Ascending aorta (tissue), 2 donors: ENCODE measurements at regions of chr7 and their contacts with region 1.

Region 1: GRCh38 chr7:38932509-38933168 is 23.6 kb upstream of the VPS41 start:
- DNase-seq: peak in 1 of 2 donors; percentile 73
- H3K4me3 ChIP-seq: no peak overlapping the region
- H3K27ac ChIP-seq: no peak overlapping the region
- H3K4me1 ChIP-seq: peaks cover 0 to 3% of the 10 kb centered on the region in 2 donors
- H3K27me3 ChIP-seq: no peaks in the 10 kb centered on the region
- CTCF ChIP-seq: peak; percentile 62 to 94 (median 85)

Region 2: DNA sequence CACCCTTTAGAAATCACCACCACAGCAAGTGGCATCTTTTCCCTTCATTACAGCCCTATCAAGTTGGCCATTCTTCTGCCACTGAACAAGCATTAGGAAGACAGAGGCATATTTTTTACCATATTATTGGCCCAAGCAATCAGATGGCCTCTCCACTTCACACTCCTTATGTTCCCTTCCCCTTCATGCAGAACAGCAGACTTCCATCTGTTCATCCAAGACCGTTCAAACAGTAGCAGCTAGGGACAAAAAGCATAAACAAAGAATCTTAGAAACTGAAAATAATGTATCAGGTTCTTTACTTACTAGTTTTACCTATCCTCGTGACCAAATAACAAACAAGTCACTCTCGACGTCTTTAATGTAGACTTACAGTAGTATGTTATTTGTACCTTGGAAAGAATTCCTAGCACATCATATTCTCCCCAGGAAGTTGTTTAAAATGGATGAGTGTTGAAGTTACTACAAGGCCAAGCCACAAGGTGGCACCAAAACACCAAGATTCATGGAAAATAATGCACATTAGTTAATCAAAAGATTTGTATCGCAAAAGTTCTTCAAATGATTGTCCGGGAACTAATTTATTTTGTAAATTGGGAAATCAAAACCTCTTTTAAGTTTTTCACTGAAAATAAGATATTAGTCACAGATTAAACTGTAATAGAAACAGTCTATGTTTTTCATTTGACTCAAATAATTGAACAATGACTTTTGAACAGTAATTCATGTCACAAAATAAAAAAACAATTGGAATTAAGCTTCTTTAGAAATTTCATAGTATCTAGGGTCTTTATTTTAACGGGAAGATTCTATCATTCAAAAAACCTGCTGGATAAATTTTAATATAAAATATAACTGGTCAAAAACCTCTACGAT is 135.8 kb before region 1 on chr7:
- intact Hi-C with region 1: loop called (anchors 5 kb)
- DNase-seq: peak in 1 of 2 donors; percentile 76
- H3K4me3 ChIP-seq: no peak overlapping the region
- H3K27ac ChIP-seq: no peak overlapping the region
- H3K4me1 ChIP-seq: no peaks in the 10 kb centered on the region
- H3K27me3 ChIP-seq: no peaks in the 10 kb centered on the region
- CTCF ChIP-seq: peak; percentile 56 to 86 (median 75)

Region 3: DNA sequence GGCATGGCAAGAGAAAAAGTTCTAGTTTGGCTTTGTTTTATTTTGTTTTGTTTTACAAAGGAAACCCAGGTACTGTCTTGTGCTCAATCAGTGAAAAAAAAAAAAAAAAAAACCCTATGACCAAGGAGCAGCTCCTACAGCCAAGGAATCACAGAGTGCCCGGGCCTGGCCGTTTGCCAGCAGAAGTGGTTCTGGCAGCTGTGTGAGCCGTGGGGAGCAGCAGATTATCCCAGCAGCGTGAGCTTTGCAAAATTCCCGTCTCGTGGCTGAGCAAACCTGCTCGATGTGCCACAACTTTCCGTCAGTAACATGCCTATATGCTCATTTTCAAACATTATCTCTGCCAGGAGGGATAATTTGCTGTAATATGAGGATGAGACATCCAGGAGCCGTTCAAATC is 338.8 kb after region 1 on chr7:
- intact Hi-C with region 1: loop called (anchors 10 kb)
- DNase-seq: peak in 1 of 2 donors; percentile 79
- H3K4me3 ChIP-seq: no peak overlapping the region
- H3K27ac ChIP-seq: no peak overlapping the region
- H3K4me1 ChIP-seq: no peaks in the 10 kb centered on the region
- H3K27me3 ChIP-seq: no peaks in the 10 kb centered on the region
- CTCF ChIP-seq: no peak

Region 4: GRCh38 chr7:39465055-39465929 is 532.7 kb after region 1 on chr7:
- intact Hi-C with region 1: loop called (anchors 1 kb)
- DNase-seq: peak in 1 of 2 donors; percentile 67
- H3K4me3 ChIP-seq: peak overlapping the region; percentile 8 to 25
- H3K27ac ChIP-seq: no peak overlapping the region
- H3K4me1 ChIP-seq: no peaks in the 10 kb centered on the region
- H3K27me3 ChIP-seq: no peaks in the 10 kb centered on the region
- CTCF ChIP-seq: peak; percentile 53 to 84 (median 81)

Region 5: GRCh38 chr7:39517240-39517639 is 584.6 kb after region 1 on chr7:
- intact Hi-C with region 1: loop called (anchors 5 kb)
- DNase-seq: no peak
- H3K4me3 ChIP-seq: no peak overlapping the region
- H3K27ac ChIP-seq: no peak overlapping the region
- H3K4me1 ChIP-seq: no peaks in the 10 kb centered on the region
- H3K27me3 ChIP-seq: no peaks in the 10 kb centered on the region
- CTCF ChIP-seq: no peak